ENCODE measurements at regions of chr10 and their contacts with region 1.

Region 1: GRCh38 chr10:89217057-89217990 is 10.2 kb upstream of the CH25H start:
- DNase-seq: peak; percentile 43
- ATAC-seq: no peak
- H3K4me3 ChIP-seq: no peak overlapping the region
- H3K27ac ChIP-seq: no peak overlapping the region
- H3K4me1 ChIP-seq: no peaks in the 10 kb centered on the region
- H3K27me3 ChIP-seq: no peaks in the 10 kb centered on the region
- CTCF ChIP-seq: peak; percentile 59
- EP300 ChIP-seq: no peak
- POLR2A ChIP-seq: no peak
- RAD21 ChIP-seq: no peak

Region 2: GRCh38 chr10:88835096-88835909 is 382.0 kb before region 1 on chr10:
- CTCF ChIA-PET with region 1: no interaction called
- POLR2A ChIA-PET with region 1: no interaction called
- in situ Hi-C with region 1: loop called (anchors 25 kb)
- intact Hi-C with region 1: loop called (anchors 2 kb)
- DNase-seq: peak; percentile 68
- ATAC-seq: peak; percentile 99
- H3K4me3 ChIP-seq: no peak overlapping the region
- H3K27ac ChIP-seq: no peak overlapping the region
- H3K4me1 ChIP-seq: no peaks in the 10 kb centered on the region
- H3K27me3 ChIP-seq: no peaks in the 10 kb centered on the region
- CTCF ChIP-seq: peak; percentile 90
- EP300 ChIP-seq: no peak
- POLR2A ChIP-seq: no peak
- RAD21 ChIP-seq: no peak; the same call in 1 of the 2 replicates

Region 3: GRCh38 chr10:89029785-89030437 is 187.4 kb before region 1 on chr10:
- CTCF ChIA-PET with region 1: interaction called, 26 read pairs
- POLR2A ChIA-PET with region 1: no interaction called
- in situ Hi-C with region 1: no loop called
- intact Hi-C with region 1: loop called (anchors 1 kb)
- DNase-seq: peak; percentile 53
- ATAC-seq: peak; percentile 79
- H3K4me3 ChIP-seq: no peak overlapping the region
- H3K27ac ChIP-seq: no peak overlapping the region
- H3K4me1 ChIP-seq: no peaks in the 10 kb centered on the region
- H3K27me3 ChIP-seq: no peaks in the 10 kb centered on the region
- CTCF ChIP-seq: peak; percentile 86
- EP300 ChIP-seq: no peak
- POLR2A ChIP-seq: no peak
- RAD21 ChIP-seq: peak; percentile 31; the same call in 1 of the 2 replicates

Region 4: GRCh38 chr10:89251409-89252224 is 34.3 kb after region 1 on chr10 and contains the start of gene LIPA:
- CTCF ChIA-PET with region 1: no interaction called
- POLR2A ChIA-PET with region 1: no interaction called
- in situ Hi-C with region 1: no loop called
- intact Hi-C with region 1: loop called (anchors 2 kb)
- DNase-seq: peak; percentile 94
- ATAC-seq: peak; percentile 96
- H3K4me3 ChIP-seq: peak within 1 kb of the TSS; percentile 81 to 97 (median 89)
- H3K27ac ChIP-seq: peak within 1 kb of the TSS; percentile 71
- H3K4me1 ChIP-seq: peaks cover 18% of the 10 kb centered on the region
- H3K27me3 ChIP-seq: no peaks in the 10 kb centered on the region; a peak in 1 of 5 replicates
- CTCF ChIP-seq: peak; percentile 31
- EP300 ChIP-seq: no peak
- POLR2A ChIP-seq: peak; percentile 80 to 89
- RAD21 ChIP-seq: peak; percentile 45; the same call in 1 of the 2 replicates
- total RNA-seq, gene LIPA: 50.6 and 79.5 TPM in 2 replicates

Region 5: GRCh38 chr10:89278034-89278535 is 60.8 kb after region 1 on chr10:
- CTCF ChIA-PET with region 1: no interaction called
- POLR2A ChIA-PET with region 1: no interaction called
- in situ Hi-C with region 1: no loop called
- intact Hi-C with region 1: no loop called
- DNase-seq: peak; percentile 81
- ATAC-seq: peak; percentile 98
- H3K4me3 ChIP-seq: no peak overlapping the region
- H3K27ac ChIP-seq: peak overlapping the region; percentile 2
- H3K4me1 ChIP-seq: peaks cover 24% of the 10 kb centered on the region
- H3K27me3 ChIP-seq: no peaks in the 10 kb centered on the region; a peak in 1 of 5 replicates
- CTCF ChIP-seq: no peak
- EP300 ChIP-seq: peak in 1 of 2 experiments; percentile 53; a peak in 1 of 4 replicates
- POLR2A ChIP-seq: no peak
- RAD21 ChIP-seq: no peak